OCI-LY7 (cell line): ENCODE measurements at regions of chr4 and their contacts with region 1.

Region 1: DNA sequence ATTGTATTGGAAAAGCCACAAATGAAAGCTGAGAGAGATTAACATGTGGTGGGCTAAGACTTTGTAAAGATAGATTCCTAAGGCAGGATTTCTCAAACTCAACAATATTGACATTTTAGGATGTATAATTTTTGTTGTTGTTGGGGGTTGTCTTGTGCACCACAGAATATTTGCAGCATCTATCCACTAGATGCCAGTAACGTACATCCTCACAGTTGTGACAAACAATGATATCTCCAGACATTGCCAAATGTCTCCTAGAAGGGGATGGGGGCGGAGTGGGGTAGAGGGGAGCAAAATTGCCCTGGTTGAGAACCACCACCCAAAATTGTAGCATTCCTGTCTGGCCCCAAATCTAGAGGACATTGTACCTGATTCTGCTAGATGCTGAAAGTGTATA is 14.7 kb upstream of the CBR4 start:
- DNase-seq: peak; percentile 19
- H3K4me3 ChIP-seq: no peak overlapping the region
- H3K27ac ChIP-seq: no peak overlapping the region
- H3K4me1 ChIP-seq: no peaks in the 10 kb centered on the region
- CTCF ChIP-seq: peak; percentile 72

Region 2: GRCh38 chr4:168931182-168931650 is 93.5 kb before region 1 on chr4:
- CTCF ChIA-PET with region 1: no interaction called
- POLR2A ChIA-PET with region 1: no interaction called
- intact Hi-C with region 1: no loop called
- DNase-seq: no peak
- H3K4me3 ChIP-seq: no peak overlapping the region
- H3K27ac ChIP-seq: no peak overlapping the region
- H3K4me1 ChIP-seq: no peaks in the 10 kb centered on the region
- CTCF ChIP-seq: no peak

Region 3: GRCh38 chr4:169492438-169493163 is 467.8 kb after region 1 on chr4:
- CTCF ChIA-PET with region 1: no interaction called
- POLR2A ChIA-PET with region 1: no interaction called
- intact Hi-C with region 1: loop called (anchors 5 kb)
- DNase-seq: peak; percentile 45
- H3K4me3 ChIP-seq: no peak overlapping the region
- H3K27ac ChIP-seq: no peak overlapping the region
- H3K4me1 ChIP-seq: no peaks in the 10 kb centered on the region
- CTCF ChIP-seq: peak; percentile 87